Activated T-helper 1 cell treated with anti-CD3 and anti-CD28 coated beads, Interleukin-12 subunit alpha, Interleukin-12 subunit beta, Interleukin-2, Interleukin-4 antibody, amounts not matched to agents 30 ng/mL and 10 ng/mL and 1 ng/mL, durations not matched to agents 14 hours and 24 hours and 36 hours (primary cell): ENCODE measurements at regions of chr16 and their contacts with region 1.

Region 1: DNA sequence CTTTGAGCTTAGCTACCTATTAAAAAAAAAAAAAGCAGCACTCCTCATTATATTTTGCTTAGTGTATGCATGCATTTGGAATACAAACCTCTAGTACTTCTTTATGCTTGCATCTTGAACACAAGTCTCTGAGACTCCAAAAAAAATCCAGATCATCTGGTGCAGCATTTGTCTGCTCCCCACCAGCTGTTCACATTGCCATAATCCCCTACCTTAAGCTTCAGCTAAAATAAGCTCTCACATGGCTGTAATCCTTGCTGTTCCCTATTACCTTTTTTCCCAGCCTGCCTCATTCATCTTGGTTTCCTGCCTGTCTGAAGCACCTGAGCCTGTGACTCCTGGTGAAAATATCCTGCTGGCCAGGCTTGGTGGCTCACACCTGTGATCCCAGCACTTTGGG is 7.5 kb upstream of the NFATC2IP start:
- DNase-seq: no peak
- H3K4me3 Mint-ChIP-seq: no peak overlapping the region
- H3K27ac Mint-ChIP-seq: no peak overlapping the region
- H3K4me1 Mint-ChIP-seq: peaks cover 18% of the 10 kb centered on the region
- H3K27me3 Mint-ChIP-seq: no peaks in the 10 kb centered on the region

Region 2: DNA sequence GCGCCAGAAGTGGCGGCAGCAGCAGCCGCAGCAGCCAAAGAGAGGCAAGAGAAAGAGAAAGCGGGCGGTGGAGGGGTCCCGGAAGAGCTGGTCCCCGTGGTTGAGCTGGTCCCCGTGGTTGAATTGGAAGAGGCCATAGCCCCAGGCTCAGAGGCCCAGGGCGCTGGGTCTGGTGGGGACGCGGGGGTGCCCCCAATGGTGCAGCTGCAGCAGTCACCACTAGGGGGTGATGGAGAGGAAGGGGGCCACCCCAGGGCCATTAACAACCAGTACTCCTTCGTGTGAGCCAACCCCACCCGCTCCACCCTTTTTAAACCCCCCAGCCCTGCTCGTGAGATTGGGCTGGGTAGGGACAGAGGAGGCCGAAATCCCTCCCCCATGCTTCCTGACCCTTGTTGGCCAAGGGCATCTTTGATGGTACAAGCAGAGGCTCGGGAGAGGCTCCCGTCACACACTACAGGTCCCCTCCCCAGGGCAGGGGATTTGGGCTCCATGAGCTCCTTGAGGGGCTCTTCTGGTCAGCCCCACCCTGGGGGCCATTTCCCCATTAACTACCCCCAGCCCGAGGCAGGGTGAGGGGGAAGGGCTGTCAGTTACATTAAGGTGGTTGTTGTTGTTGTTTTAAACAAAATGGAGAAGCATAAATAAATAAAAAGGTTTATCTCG is 69.6 kb before region 1 on chr16:
- intact Hi-C with region 1: loop called (anchors 1 kb)
- DNase-seq: peak; percentile 39
- H3K4me3 Mint-ChIP-seq: no peak overlapping the region
- H3K27ac Mint-ChIP-seq: no peak overlapping the region
- H3K4me1 Mint-ChIP-seq: peaks cover 2% of the 10 kb centered on the region
- H3K27me3 Mint-ChIP-seq: no peaks in the 10 kb centered on the region

Region 3: DNA sequence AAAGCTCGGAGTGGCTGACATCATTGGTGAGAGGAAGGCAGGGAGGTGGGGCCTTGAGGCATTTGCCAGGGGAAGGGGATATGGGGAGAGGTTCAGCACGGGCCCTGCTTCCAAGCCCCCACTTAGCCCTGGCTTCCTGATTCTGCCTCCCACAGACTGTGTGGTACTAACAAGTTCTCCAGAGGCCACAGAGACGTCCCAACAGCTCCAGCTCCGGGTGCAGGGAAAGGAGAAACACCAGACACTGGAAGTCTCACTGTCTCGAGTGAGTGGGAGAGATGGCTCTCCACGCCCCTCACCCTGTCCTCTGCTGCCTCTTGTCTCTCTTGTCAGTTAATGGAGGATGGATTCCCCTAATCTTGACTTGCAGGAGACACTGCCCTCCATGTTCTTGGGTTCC is 15.6 kb after region 1 on chr16:
- intact Hi-C with region 1: no loop called
- DNase-seq: no peak
- H3K4me3 Mint-ChIP-seq: no peak overlapping the region
- H3K27ac Mint-ChIP-seq: no peak overlapping the region
- H3K4me1 Mint-ChIP-seq: peaks cover 7% of the 10 kb centered on the region
- H3K27me3 Mint-ChIP-seq: no peaks in the 10 kb centered on the region

Region 4: DNA sequence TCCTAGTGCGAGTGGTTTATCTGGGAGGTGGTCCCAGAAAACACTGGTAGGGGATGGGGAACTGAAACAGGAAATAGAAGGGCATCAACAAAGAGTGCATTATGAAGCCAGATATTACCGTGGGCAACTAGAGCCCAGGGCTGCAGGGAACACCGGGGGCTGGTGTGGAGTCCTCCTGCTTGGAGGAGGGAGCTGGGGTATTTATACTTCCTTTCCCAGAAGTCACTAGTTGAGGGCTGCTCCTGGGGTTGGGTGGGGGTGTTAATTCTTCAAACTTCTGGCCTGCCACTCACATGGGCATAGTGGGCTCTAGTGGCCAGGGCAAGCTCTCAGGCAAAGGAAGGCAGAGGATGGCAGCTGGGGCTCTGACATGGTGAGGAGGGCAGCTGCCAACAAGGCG is 56.3 kb after region 1 on chr16:
- intact Hi-C with region 1: no loop called
- DNase-seq: no peak
- H3K4me3 Mint-ChIP-seq: no peak overlapping the region
- H3K27ac Mint-ChIP-seq: no peak overlapping the region
- H3K4me1 Mint-ChIP-seq: no peaks in the 10 kb centered on the region
- H3K27me3 Mint-ChIP-seq: peaks cover 3% of the 10 kb centered on the region